ENCODE measurements at regions of chr14 and their contacts with region 1.

Region 1: GRCh38 chr14:21852061-21852664 is 178.5 kb upstream of the OR4E1 start:
- DNase-seq: peak; percentile 89
- ATAC-seq: peak; percentile 83
- H3K4me3 Mint-ChIP-seq: peak overlapping the region; percentile 79
- H3K27ac Mint-ChIP-seq: peak overlapping the region; percentile 80
- H3K4me1 Mint-ChIP-seq: peaks cover 6% of the 10 kb centered on the region
- H3K27me3 Mint-ChIP-seq: peaks cover 7% of the 10 kb centered on the region
- CTCF ChIP-seq: peak; percentile 71

Region 2: GRCh38 chr14:21825149-21825743 is 26.9 kb before region 1 on chr14:
- CTCF ChIA-PET with region 1: interaction called, 11 read pairs
- POLR2A ChIA-PET with region 1: no interaction called
- intact Hi-C with region 1: no loop called
- DNase-seq: peak; percentile 64
- ATAC-seq: peak; percentile 99
- H3K4me3 Mint-ChIP-seq: peak overlapping the region; percentile 61
- H3K27ac Mint-ChIP-seq: no peak overlapping the region
- H3K4me1 Mint-ChIP-seq: peaks cover 4% of the 10 kb centered on the region
- H3K27me3 Mint-ChIP-seq: peaks cover 26% of the 10 kb centered on the region
- CTCF ChIP-seq: peak; percentile 73

Region 3: DNA sequence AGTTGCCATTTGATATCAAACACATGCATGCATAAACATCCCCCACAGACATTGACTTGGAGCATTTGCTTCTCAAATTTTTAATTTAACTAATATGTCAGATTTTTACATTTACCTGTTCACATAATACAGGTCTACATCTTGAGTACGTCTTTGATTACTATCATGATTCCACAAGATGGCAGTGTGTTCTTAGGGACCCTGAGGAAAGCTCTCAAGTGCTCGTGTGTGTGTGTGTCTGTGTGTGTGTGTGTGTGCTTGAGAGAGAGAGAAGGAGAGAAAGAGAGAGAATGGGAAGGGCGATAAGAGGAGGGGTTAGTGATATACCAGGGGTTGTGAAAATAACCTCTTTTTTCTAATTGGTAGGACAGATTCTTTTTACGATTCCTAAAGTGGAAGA is 11.4 kb before region 1 on chr14:
- CTCF ChIA-PET with region 1: interaction called, 57 read pairs
- POLR2A ChIA-PET with region 1: no interaction called
- intact Hi-C with region 1: no loop called
- DNase-seq: no peak
- ATAC-seq: peak; percentile 65
- H3K4me3 Mint-ChIP-seq: peak overlapping the region; percentile 46
- H3K27ac Mint-ChIP-seq: peak overlapping the region; percentile 23
- H3K4me1 Mint-ChIP-seq: peaks cover 3% of the 10 kb centered on the region
- H3K27me3 Mint-ChIP-seq: peaks cover 12% of the 10 kb centered on the region
- CTCF ChIP-seq: no peak

Region 4: GRCh38 chr14:21874167-21874566 is 22.0 kb after region 1 on chr14:
- CTCF ChIA-PET with region 1: interaction called, 14 read pairs
- POLR2A ChIA-PET with region 1: interaction called, 3 read pairs
- intact Hi-C with region 1: no loop called
- DNase-seq: no peak
- ATAC-seq: peak; percentile 24
- H3K4me3 Mint-ChIP-seq: peak overlapping the region; percentile 10
- H3K27ac Mint-ChIP-seq: peak overlapping the region; percentile 64
- H3K4me1 Mint-ChIP-seq: peaks cover 25% of the 10 kb centered on the region
- H3K27me3 Mint-ChIP-seq: no peaks in the 10 kb centered on the region
- CTCF ChIP-seq: no peak

Region 5: DNA sequence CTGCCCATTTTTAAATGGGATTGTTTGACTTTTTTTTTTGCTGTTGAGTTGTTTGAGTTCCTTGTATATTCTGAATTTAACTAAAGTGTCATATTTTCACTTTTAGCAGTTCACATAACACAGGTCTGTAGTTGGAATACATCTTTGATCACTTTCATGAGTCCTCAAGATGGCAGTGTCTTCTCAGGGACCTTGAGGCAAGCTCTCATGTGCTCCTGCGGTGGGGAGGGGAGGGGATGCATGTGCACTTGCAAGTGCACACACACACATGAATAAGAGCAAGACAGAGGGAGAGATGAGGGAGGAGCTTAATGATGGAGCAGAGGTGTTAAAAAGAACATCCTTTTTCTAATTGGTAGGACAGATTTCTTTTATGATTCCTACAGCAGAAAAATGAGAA is 112.9 kb after region 1 on chr14:
- CTCF ChIA-PET with region 1: no interaction called
- POLR2A ChIA-PET with region 1: no interaction called
- intact Hi-C with region 1: no loop called
- DNase-seq: peak; percentile 72
- ATAC-seq: peak; percentile 96
- H3K4me3 Mint-ChIP-seq: peak overlapping the region; percentile 59
- H3K27ac Mint-ChIP-seq: peak overlapping the region; percentile 72
- H3K4me1 Mint-ChIP-seq: peaks cover 14% of the 10 kb centered on the region
- H3K27me3 Mint-ChIP-seq: no peaks in the 10 kb centered on the region
- CTCF ChIP-seq: no peak

Region 6: GRCh38 chr14:22505697-22506377 is 653.7 kb after region 1 on chr14:
- CTCF ChIA-PET with region 1: no interaction called
- POLR2A ChIA-PET with region 1: interaction called, 11 read pairs
- intact Hi-C with region 1: no loop called
- DNase-seq: no peak
- ATAC-seq: peak; percentile 38
- H3K4me3 Mint-ChIP-seq: peak overlapping the region; percentile 79
- H3K27ac Mint-ChIP-seq: peak overlapping the region; percentile 96
- H3K4me1 Mint-ChIP-seq: peaks cover 10% of the 10 kb centered on the region
- H3K27me3 Mint-ChIP-seq: no peaks in the 10 kb centered on the region
- CTCF ChIP-seq: no peak